Heart left ventricle (tissue), 16 donors: ENCODE measurements at regions of chr2 and their contacts with region 1.

Region 1: GRCh38 chr2:16665748-16666448 is at the start of gene CYRIA:
- DNase-seq: peak; percentile 58 to 87 (median 80)
- ATAC-seq: peak; percentile 17 to 85 (median 82)
- H3K4me3 ChIP-seq: peak within 1 kb of the TSS; percentile 32 to 94 (median 70)
- H3K27ac ChIP-seq: peak within 1 kb of the TSS; percentile 11 to 86 (median 72)
- H3K4me1 ChIP-seq: peaks cover 0 to 49% (median 18%) of the 10 kb centered on the region in 12 donors
- H3K27me3 ChIP-seq: no peaks in the 10 kb centered on the region
- CTCF ChIP-seq: no peak
- POLR2A ChIP-seq: no peak
- total RNA-seq, gene CYRIA: 0.86 to 19.9 (median 3.0) TPM

Region 2: GRCh38 chr2:16608661-16609643 is 56.9 kb before region 1 on chr2:
- intact Hi-C with region 1: loop called in 3 of 10 experiments (anchors 10 kb)
- DNase-seq: peak; percentile 81 to 91 (median 85)
- ATAC-seq: peak; percentile 83 to 92 (median 88)
- H3K4me3 ChIP-seq: peak overlapping the region in 11 of 12 donors; percentile 10 to 56 (median 51)
- H3K27ac ChIP-seq: peak overlapping the region in 3 of 12 donors; percentile 32 to 77 (median 60)
- H3K4me1 ChIP-seq: peaks cover 0 to 36% (median 10%) of the 10 kb centered on the region in 12 donors
- H3K27me3 ChIP-seq: no peaks in the 10 kb centered on the region
- CTCF ChIP-seq: peak; percentile 84 to 96 (median 93)
- POLR2A ChIP-seq: no peak

Region 3: GRCh38 chr2:16617282-16618261 is 48.3 kb before region 1 on chr2:
- intact Hi-C with region 1: loop called in 5 of 10 experiments (anchors 5 to 10 kb)
- DNase-seq: peak in 1 of 5 donors; percentile 26
- ATAC-seq: peak; percentile 11 to 47 (median 30)
- H3K4me3 ChIP-seq: no peak overlapping the region
- H3K27ac ChIP-seq: peak overlapping the region in 3 of 12 donors; percentile 0 to 76 (median 37)
- H3K4me1 ChIP-seq: peaks cover 0 to 62% (median 26%) of the 10 kb centered on the region in 12 donors
- H3K27me3 ChIP-seq: no peaks in the 10 kb centered on the region
- CTCF ChIP-seq: peak; percentile 22 to 58 (median 44)
- POLR2A ChIP-seq: no peak

Region 4: GRCh38 chr2:16623031-16623430 is 42.9 kb before region 1 on chr2:
- intact Hi-C with region 1: loop called in 5 of 10 experiments (anchors 5 to 10 kb)
- DNase-seq: no peak
- ATAC-seq: no peak
- H3K4me3 ChIP-seq: no peak overlapping the region
- H3K27ac ChIP-seq: peak overlapping the region in 3 of 12 donors; percentile 33 to 94 (median 71)
- H3K4me1 ChIP-seq: peaks cover 0 to 79% (median 31%) of the 10 kb centered on the region in 12 donors
- H3K27me3 ChIP-seq: no peaks in the 10 kb centered on the region
- CTCF ChIP-seq: no peak
- POLR2A ChIP-seq: no peak

Region 5: GRCh38 chr2:16630463-16630862 is 35.4 kb before region 1 on chr2:
- intact Hi-C with region 1: loop called in 1 of 10 experiments (anchors 5 kb)
- DNase-seq: no peak
- ATAC-seq: peak in 1 of 4 donors; percentile 38
- H3K4me3 ChIP-seq: no peak overlapping the region
- H3K27ac ChIP-seq: peak overlapping the region in 1 of 12 donors; percentile 55
- H3K4me1 ChIP-seq: peaks cover 0 to 88% (median 24%) of the 10 kb centered on the region in 12 donors
- H3K27me3 ChIP-seq: no peaks in the 10 kb centered on the region
- CTCF ChIP-seq: peak in 1 of 12 donors; percentile 14
- POLR2A ChIP-seq: no peak

Region 6: DNA sequence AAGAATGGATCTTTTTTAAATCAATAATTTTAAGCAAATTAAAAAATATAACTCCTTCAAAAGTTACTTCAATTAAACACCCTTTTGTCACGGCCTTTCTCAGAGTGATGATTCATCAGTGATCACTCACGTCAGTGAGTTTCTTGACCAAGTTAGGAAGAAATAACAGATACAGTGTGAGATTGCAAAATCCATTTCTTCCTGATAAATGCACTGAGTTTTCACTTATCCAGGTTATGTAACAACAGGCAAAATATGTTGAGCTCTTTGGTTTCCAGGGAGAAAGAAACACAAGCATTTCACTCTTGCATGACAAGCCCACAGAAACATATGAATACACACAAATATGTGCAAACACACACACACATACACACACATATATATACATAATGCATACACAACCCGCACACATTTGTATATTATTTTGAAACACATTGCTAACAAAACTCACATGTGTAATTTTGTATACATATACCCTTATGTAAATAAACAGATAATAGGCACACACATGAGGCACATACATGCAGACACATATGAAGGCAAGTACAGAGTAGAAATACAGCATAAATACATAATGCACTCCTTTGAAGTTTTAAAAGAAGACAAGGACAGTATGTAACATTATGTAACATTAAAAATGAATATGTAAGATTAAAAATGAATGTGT is 195.8 kb after region 1 on chr2:
- intact Hi-C with region 1: no loop called
- DNase-seq: no peak
- ATAC-seq: no peak
- H3K4me3 ChIP-seq: no peak overlapping the region
- H3K27ac ChIP-seq: no peak overlapping the region
- H3K4me1 ChIP-seq: peaks cover 0 to 8% (median 0%) of the 10 kb centered on the region in 12 donors
- H3K27me3 ChIP-seq: no peaks in the 10 kb centered on the region
- CTCF ChIP-seq: no peak
- POLR2A ChIP-seq: no peak